ENCODE measurements at regions of chr2 and their contacts with region 1.

Region 1: DNA sequence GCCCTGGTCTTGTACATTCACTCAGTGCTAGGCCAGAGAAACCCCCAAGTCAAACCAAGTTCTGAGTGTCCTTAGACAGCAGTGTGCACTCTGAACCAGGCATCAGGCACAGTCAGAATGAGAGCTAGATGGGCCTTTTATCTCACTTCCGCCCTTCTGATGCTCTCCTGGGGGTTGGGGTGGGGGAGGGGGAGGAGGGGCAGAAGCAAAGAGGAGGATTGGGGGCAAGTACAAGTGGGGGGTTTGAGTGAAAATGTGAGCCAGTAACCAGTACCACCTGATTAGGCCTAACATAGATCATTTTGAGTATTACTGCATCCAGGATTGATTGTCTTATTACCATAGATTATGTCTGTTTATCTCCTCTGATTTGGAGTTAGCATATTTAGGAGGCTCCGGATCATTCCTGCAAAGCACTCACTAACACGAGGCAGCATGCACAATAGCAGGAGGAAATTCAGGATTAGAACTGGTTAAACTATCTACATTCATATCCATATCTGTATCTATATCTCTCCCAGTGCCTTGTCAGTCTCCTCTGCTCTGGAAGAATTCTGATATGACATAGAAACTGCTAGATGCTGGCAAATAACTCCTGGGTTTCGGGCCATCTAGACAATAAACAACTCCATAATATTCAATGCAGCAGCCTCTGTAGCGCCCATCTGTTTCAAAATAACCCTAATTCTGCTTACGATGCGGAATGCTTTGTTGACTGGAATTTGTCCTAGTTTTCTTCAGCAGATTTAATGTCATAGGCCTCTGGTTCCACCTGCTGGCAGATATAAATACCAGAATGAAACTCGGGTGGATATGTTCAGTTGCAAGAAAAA is 149.1 kb downstream of the RHBDD1 start:
- DNase-seq: no peak
- H3K4me3 ChIP-seq: no peak overlapping the region
- H3K27ac ChIP-seq: peak overlapping the region in 6 of 8 donors; percentile 0 to 62 (median 33)
- H3K4me1 ChIP-seq: peaks cover 0 to 20% (median 12%) of the 10 kb centered on the region in 6 donors
- H3K27me3 ChIP-seq: no peaks in the 10 kb centered on the region
- CTCF ChIP-seq: peak in 9 of 11 experiments; percentile 40 to 67 (median 57)
- POLR2A ChIP-seq: no peak

Region 2: DNA sequence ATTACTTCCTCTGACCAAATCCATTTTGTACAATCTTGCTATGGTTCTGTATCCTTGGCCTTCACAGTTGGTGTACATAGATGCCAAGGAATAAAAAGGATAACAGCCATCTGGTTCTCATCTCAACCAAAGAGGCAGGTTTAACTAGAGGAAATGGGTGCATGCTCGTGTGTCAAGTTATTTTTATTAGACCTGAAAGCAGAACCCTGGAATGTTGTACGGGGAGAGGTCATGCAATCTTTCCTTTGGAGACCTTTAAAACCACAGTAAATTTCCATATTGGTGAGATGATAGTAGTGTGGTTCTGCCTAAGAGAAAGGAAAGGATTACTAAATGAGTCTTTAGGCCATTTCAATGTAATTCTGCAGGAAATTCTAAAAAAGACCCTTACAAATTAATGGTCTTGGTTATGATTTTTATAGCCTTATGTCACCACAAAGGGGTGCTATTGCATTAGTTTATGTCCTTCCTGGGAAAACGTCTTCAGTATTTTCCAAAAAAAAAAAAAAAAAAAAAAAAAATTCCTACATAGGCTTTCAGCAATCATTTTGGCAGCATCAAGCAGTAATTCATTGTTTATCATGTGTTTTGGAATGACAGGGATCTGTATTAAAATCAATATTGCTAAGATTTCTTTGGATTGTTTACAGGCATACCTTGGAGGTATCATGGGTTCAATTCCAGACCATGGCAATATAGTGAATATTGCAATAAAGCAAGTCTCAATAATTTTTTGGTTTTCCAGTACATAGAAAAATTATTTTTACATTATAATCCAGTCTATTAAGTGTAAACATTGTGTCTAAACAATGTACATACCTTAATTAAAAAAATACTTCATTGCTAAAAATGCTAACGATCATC is 1314.6 kb before region 1 on chr2:
- intact Hi-C with region 1: loop called (anchors 10 kb)
- DNase-seq: no peak
- H3K4me3 ChIP-seq: no peak overlapping the region
- H3K27ac ChIP-seq: no peak overlapping the region
- H3K4me1 ChIP-seq: no peaks in the 10 kb centered on the region
- H3K27me3 ChIP-seq: no peaks in the 10 kb centered on the region
- CTCF ChIP-seq: peak in 6 of 11 experiments; percentile 17 to 47 (median 36)
- POLR2A ChIP-seq: no peak

Region 3: GRCh38 chr2:225889446-225889850 is 1095.5 kb before region 1 on chr2:
- intact Hi-C with region 1: loop called (anchors 5 kb)
- DNase-seq: no peak
- H3K4me3 ChIP-seq: no peak overlapping the region
- H3K27ac ChIP-seq: no peak overlapping the region
- H3K4me1 ChIP-seq: peaks cover 0 to 6% (median 0%) of the 10 kb centered on the region in 6 donors
- H3K27me3 ChIP-seq: no peaks in the 10 kb centered on the region
- CTCF ChIP-seq: peak in 10 of 11 experiments; percentile 6 to 61 (median 54)
- POLR2A ChIP-seq: no peak

Region 4: DNA sequence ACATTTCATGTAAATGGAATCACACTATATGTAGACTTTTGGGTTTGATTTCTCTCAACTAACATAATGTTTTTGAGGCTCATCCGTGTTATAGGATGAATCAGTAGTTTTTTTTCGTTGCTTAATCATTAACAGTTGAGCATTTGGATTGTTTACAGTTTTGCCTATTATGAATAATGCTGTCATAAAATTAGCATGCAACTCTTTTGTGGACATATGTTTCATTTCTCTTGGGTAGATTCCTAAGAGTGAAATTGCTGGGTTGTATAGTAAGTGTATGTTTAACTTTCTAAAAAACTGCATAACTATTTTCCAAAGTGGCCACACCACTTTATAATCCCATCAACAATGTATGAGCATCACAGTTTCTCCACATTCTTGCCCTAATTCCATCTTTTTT is 156.8 kb before region 1 on chr2:
- intact Hi-C with region 1: loop called (anchors 10 kb)
- DNase-seq: no peak
- H3K4me3 ChIP-seq: no peak overlapping the region
- H3K27ac ChIP-seq: no peak overlapping the region
- H3K4me1 ChIP-seq: no peaks in the 10 kb centered on the region
- H3K27me3 ChIP-seq: no peaks in the 10 kb centered on the region
- CTCF ChIP-seq: no peak
- POLR2A ChIP-seq: no peak

Measured in spleen (tissue), 13 donors.